ENCODE measurements at regions of chr22 and their contacts with region 1.

Region 1: DNA sequence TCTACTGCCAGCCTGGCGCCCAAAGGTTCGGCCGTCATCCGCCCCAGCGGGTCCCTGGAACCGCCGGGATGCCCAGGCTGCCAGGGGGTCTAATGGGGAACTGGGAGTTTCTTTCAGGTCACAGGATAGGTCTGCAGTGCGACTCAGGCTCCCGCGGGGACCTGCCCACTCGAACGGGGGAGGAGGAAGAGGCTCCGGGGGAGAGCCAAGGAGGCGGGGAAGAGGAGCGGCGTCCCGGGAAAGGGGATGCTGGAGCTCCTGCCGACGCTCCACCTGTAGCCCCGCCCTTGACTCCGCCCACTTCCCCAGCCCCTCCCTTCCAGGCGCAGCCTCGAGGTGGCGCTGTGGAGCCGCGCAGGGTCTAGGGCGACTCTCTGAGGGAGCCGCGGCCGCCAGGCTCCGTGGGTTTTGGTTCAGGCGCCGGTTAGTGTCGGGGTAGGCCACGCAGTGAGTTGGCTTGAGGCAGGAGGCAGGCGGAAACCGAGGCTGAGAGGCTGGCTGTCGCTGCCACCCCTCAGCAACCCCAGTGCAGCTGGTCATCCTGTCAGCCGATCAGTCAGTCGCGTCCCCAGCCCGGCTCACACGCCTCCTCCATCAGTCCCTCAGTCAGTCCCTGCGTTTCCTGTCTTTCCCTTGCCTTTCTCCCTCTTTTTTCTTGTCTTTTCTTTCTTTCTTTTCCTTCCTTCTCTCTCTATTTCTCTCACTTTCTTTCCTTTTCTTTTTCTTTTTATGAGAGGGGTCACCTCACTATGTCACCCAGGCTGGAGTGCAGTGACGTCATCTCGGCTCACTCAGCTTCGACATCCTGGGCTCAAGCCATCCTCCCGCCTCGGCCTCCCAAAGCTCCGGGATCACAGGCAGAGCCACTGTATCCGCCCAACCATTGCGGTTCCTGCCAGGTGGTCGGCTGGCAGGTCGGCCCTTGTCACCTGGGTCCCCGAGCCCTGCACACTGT is 26.4 kb downstream of the YWHAH start:
- DNase-seq: peak; percentile 85
- H3K4me3 ChIP-seq: peak overlapping the region; percentile 45 to 60 (median 57)
- H3K27ac ChIP-seq: peak overlapping the region; percentile 17
- H3K4me1 ChIP-seq: peaks cover 5% of the 10 kb centered on the region
- H3K27me3 ChIP-seq: no peaks in the 10 kb centered on the region
- CTCF ChIP-seq: peak; percentile 70 to 99

Region 2: GRCh38 chr22:31496007-31496734 is 474.6 kb before region 1 on chr22 and contains the start of gene SFI1:
- CTCF ChIA-PET with region 1: no interaction called
- dilution Hi-C with region 1: no loop called
- in situ Hi-C with region 1: loop called in 1 of 2 experiments (anchors 25 kb)
- intact Hi-C with region 1: no loop called
- DNase-seq: peak; percentile 89
- H3K4me3 ChIP-seq: peak within 1 kb of the TSS; percentile 58 to 83 (median 71)
- H3K27ac ChIP-seq: peak within 1 kb of the TSS; percentile 83
- H3K4me1 ChIP-seq: peaks cover 13% of the 10 kb centered on the region
- H3K27me3 ChIP-seq: no peaks in the 10 kb centered on the region
- CTCF ChIP-seq: no peak
- total RNA-seq, gene SFI1: 20.8 to 41.7 TPM

Region 3: DNA sequence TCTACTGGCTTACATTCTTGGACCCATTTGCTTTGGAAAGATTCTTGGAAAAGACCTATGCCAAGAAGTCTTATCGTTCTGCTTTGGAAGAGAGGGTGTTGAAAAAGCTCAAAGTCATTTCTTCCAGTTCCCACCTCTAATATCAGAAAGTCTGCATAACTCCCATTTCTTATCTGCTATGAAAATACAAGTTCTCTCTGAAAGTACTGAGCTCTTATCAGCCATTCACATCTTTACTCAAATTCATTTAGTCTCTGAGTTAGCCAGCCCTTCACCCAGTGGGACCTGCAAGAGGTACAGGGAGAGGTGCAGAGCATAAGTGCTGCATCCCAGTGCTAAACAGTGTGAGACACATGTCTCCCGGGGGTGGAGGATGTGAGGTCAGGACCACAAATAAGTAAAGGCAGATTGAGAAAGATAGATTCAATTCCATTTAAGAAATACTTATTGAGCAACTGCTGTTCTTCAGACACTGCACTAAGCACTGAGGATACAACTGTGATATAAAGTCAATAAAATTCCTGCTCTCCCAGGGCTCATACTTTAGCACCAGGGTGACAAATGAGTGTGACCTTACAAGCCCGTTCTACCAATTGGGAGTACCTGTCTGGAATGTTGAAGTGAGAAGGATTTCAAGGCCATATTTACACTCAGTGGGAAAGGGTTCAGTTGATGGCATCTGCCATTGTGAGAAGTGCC is 385.5 kb before region 1 on chr22:
- CTCF ChIA-PET with region 1: interaction called, 16 read pairs
- dilution Hi-C with region 1: no loop called
- in situ Hi-C with region 1: no loop called
- intact Hi-C with region 1: no loop called
- DNase-seq: no peak
- H3K4me3 ChIP-seq: no peak overlapping the region
- H3K27ac ChIP-seq: no peak overlapping the region
- H3K4me1 ChIP-seq: no peaks in the 10 kb centered on the region
- H3K27me3 ChIP-seq: no peaks in the 10 kb centered on the region
- CTCF ChIP-seq: no peak

Region 4: DNA sequence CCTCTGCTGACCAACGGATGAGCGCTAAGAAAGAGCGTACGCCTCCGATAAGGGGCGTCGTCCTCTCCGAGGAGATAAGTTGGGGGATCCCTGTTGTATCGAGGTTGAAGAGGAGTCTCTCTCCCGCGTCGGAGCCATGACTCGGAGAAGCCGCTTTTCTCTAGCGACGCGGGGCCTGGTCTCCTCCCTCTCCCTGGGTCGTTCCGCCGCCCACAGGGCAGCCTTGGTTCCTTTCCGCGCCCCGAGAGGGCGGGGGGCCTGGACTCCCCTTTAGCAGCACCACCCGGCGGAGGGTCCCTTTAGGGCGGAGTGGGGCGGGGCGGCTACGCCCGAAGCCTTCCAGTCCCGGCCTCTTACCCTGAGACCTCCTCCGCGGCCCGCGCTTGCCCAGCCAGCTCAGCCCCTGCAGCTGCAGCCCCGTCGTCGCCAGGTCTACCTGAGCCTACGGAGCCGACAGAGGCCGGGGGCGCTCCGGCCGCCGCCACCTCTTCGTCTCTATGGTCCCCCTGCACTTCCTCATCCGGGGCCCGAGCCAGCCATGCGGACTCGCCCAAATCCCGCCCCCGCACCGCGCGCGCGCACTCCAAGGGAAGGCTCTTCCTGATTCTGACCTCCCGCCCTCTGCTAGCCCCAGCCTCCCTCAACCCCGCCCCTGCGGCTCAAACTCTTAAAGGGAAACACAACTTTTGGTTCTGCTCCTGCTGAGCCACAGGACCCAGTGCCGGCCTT is 221.0 kb before region 1 on chr22 and contains the start of gene PRR14L:
- CTCF ChIA-PET with region 1: interaction called, 4 read pairs
- dilution Hi-C with region 1: no loop called
- in situ Hi-C with region 1: no loop called
- intact Hi-C with region 1: loop called (anchors 1 kb)
- DNase-seq: peak; percentile 95
- H3K4me3 ChIP-seq: peak within 1 kb of the TSS; percentile 70 to 84 (median 72)
- H3K27ac ChIP-seq: peak within 1 kb of the TSS; percentile 73
- H3K4me1 ChIP-seq: peaks cover 23% of the 10 kb centered on the region
- H3K27me3 ChIP-seq: no peaks in the 10 kb centered on the region
- CTCF ChIP-seq: peak in 1 of 2 donors; percentile 3
- total RNA-seq, gene PRR14L: 28.7 to 39.3 TPM

Region 5: GRCh38 chr22:31870890-31871289 is 99.9 kb before region 1 on chr22:
- CTCF ChIA-PET with region 1: interaction called, 8 read pairs
- dilution Hi-C with region 1: no loop called
- in situ Hi-C with region 1: no loop called
- intact Hi-C with region 1: loop called (anchors 1 kb)
- DNase-seq: peak; percentile 93
- H3K4me3 ChIP-seq: no peak overlapping the region
- H3K27ac ChIP-seq: peak overlapping the region; percentile 59
- H3K4me1 ChIP-seq: peaks cover 27% of the 10 kb centered on the region
- H3K27me3 ChIP-seq: no peaks in the 10 kb centered on the region
- CTCF ChIP-seq: peak in 1 of 2 donors; percentile 63

Region 6: DNA sequence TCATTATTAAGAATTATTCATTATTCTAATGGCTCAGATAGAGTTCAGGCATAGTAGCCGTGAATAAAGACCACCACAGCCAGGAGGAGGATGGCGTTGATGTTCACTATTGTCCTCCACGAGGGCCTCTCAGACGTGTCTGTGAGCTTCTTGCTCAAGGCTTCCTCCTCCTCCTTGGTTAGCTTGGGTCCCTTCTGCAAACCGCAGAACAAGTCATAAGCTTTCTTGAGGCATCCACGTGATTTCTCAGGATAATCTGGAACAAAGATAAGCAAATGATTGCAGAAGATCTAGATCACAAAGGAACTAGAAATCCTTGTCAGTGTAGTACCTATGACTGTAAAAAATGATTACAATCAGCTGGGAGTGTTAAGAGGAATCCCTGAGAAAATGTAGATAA is 247.7 kb after region 1 on chr22:
- CTCF ChIA-PET with region 1: no interaction called
- dilution Hi-C with region 1: loop called (anchors 10 kb)
- in situ Hi-C with region 1: no loop called
- intact Hi-C with region 1: no loop called
- DNase-seq: no peak
- H3K4me3 ChIP-seq: no peak overlapping the region
- H3K27ac ChIP-seq: no peak overlapping the region
- H3K4me1 ChIP-seq: no peaks in the 10 kb centered on the region
- H3K27me3 ChIP-seq: peaks cover 2% of the 10 kb centered on the region
- CTCF ChIP-seq: no peak